CD4-positive, alpha-beta T cell (primary cell): ENCODE measurements at regions of chr14 and their contacts with region 1.

Region 1: GRCh38 chr14:22570132-22570949 is 18.7 kb downstream of the DAD1 start:
- DNase-seq: peak; percentile 63 to 98 (median 80)
- ATAC-seq: peak; percentile 85
- H3K4me3 ChIP-seq: peak overlapping the region; percentile 45
- H3K4me3 Mint-ChIP-seq: peak overlapping the region; percentile 73
- H3K27ac ChIP-seq: peak overlapping the region; percentile 79 to 92
- H3K27ac Mint-ChIP-seq: peak overlapping the region; percentile 97
- H3K4me1 ChIP-seq: peaks cover 43% of the 10 kb centered on the region
- H3K4me1 Mint-ChIP-seq: peaks cover 71% of the 10 kb centered on the region
- H3K27me3 ChIP-seq: no peaks in the 10 kb centered on the region
- H3K27me3 Mint-ChIP-seq: no peaks in the 10 kb centered on the region
- CTCF ChIP-seq: peak; percentile 92

Region 2: GRCh38 chr14:21917699-21918436 is 652.5 kb before region 1 on chr14:
- CTCF ChIA-PET with region 1: interaction called, 28 read pairs
- POLR2A ChIA-PET with region 1: interaction called, 9 read pairs
- intact Hi-C with region 1: loop called (anchors 5 kb)
- DNase-seq: peak; percentile 17 to 84 (median 49)
- ATAC-seq: peak; percentile 66
- H3K4me3 ChIP-seq: peak overlapping the region; percentile 40
- H3K4me3 Mint-ChIP-seq: peak overlapping the region; percentile 80
- H3K27ac ChIP-seq: no peak overlapping the region
- H3K27ac Mint-ChIP-seq: peak overlapping the region; percentile 73
- H3K4me1 ChIP-seq: peaks cover 12% of the 10 kb centered on the region
- H3K4me1 Mint-ChIP-seq: peaks cover 69% of the 10 kb centered on the region
- H3K27me3 ChIP-seq: no peaks in the 10 kb centered on the region
- H3K27me3 Mint-ChIP-seq: no peaks in the 10 kb centered on the region
- CTCF ChIP-seq: peak; percentile 78

Region 3: GRCh38 chr14:22505697-22506377 is 64.5 kb before region 1 on chr14:
- CTCF ChIA-PET with region 1: interaction called, 21 read pairs
- POLR2A ChIA-PET with region 1: interaction called, 8 read pairs
- intact Hi-C with region 1: no loop called
- DNase-seq: peak in 5 of 14 experiments; percentile 26 to 65 (median 56)
- ATAC-seq: peak; percentile 36
- H3K4me3 ChIP-seq: peak overlapping the region; percentile 61
- H3K4me3 Mint-ChIP-seq: peak overlapping the region; percentile 77
- H3K27ac ChIP-seq: peak overlapping the region; percentile 77 to 99
- H3K27ac Mint-ChIP-seq: peak overlapping the region; percentile 93
- H3K4me1 ChIP-seq: peaks cover 45% of the 10 kb centered on the region
- H3K4me1 Mint-ChIP-seq: peaks cover 79% of the 10 kb centered on the region
- H3K27me3 ChIP-seq: no peaks in the 10 kb centered on the region
- H3K27me3 Mint-ChIP-seq: no peaks in the 10 kb centered on the region
- CTCF ChIP-seq: no peak

Region 4: GRCh38 chr14:22589096-22589839 is 18.9 kb after region 1 on chr14 and contains the start of gene DAD1:
- CTCF ChIA-PET with region 1: interaction called, 87 read pairs
- POLR2A ChIA-PET with region 1: interaction called, 137 read pairs
- intact Hi-C with region 1: loop called (anchors 1 to 2 kb)
- DNase-seq: peak; percentile 98 to 100 (median 100)
- ATAC-seq: peak; percentile 87
- H3K4me3 ChIP-seq: peak within 1 kb of the TSS; percentile 82
- H3K4me3 Mint-ChIP-seq: peak within 1 kb of the TSS; percentile 96
- H3K27ac ChIP-seq: peak within 1 kb of the TSS; percentile 92 to 96
- H3K27ac Mint-ChIP-seq: peak within 1 kb of the TSS; percentile 98
- H3K4me1 ChIP-seq: peaks cover 39% of the 10 kb centered on the region
- H3K4me1 Mint-ChIP-seq: peaks cover 60% of the 10 kb centered on the region
- H3K27me3 ChIP-seq: no peaks in the 10 kb centered on the region
- H3K27me3 Mint-ChIP-seq: no peaks in the 10 kb centered on the region
- CTCF ChIP-seq: no peak
- total RNA-seq, gene DAD1: 41.8 to 44.1 TPM

Region 5: GRCh38 chr14:22822571-22823098 is 252.3 kb after region 1 on chr14:
- CTCF ChIA-PET with region 1: interaction called, 25 read pairs
- POLR2A ChIA-PET with region 1: interaction called, 10 read pairs
- intact Hi-C with region 1: no loop called
- DNase-seq: peak; percentile 46 to 85 (median 64)
- ATAC-seq: peak; percentile 84
- H3K4me3 ChIP-seq: peak overlapping the region; percentile 44
- H3K4me3 Mint-ChIP-seq: peak overlapping the region; percentile 2
- H3K27ac ChIP-seq: no peak overlapping the region
- H3K27ac Mint-ChIP-seq: no peak overlapping the region
- H3K4me1 ChIP-seq: peaks cover 18% of the 10 kb centered on the region
- H3K4me1 Mint-ChIP-seq: peaks cover 23% of the 10 kb centered on the region
- H3K27me3 ChIP-seq: peaks cover 0 to 5% of the 10 kb centered on the region in 2 experiments
- H3K27me3 Mint-ChIP-seq: peaks cover 10% of the 10 kb centered on the region
- CTCF ChIP-seq: peak; percentile 83

Region 6: DNA sequence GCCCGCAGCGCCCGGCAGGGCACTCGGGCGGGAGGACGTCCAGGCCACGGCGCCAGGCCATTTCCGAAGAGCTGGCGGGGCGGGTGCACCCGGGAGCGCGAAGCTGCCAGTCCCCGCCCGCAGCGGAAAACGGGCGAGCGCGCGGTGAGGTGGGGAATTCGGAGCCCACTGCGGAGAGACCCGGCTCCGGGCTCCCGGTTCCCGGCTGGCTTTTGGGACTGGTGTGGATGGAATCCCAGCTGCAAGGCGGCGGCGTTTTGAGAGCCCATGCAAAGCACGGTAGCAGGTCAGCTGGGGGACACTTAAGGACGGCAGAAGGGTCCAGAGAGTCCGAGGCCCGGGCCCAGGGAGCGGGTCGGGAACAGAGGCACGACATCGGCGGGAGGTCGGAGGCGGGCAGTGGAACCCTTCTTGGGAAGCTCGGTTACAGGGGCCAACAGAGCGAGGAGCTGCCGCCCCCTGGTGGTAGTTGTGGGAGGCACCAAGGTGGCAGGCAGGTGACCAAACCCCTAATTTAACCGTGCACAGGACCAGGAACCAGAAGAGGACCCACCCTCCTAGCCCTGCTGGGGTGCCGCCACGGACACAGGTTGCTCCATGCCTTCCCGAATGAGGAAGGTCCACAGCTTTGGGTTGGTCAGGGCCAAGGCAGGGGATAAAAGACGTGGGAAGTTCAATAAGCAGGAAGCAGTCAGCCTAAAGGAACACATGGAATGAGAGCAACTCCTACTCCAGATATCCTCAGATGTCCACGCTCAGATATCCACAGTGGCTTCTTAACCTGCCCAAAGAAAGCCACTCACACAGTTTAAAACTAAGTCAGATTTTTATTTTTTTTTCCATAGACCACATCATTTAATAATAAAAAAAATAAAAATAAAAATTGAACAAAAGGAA is 487.7 kb after region 1 on chr14:
- CTCF ChIA-PET with region 1: interaction called, 4 read pairs
- POLR2A ChIA-PET with region 1: interaction called, 3 read pairs
- intact Hi-C with region 1: loop called (anchors 5 kb)
- DNase-seq: peak; percentile 74 to 94 (median 86)
- ATAC-seq: peak; percentile 73
- H3K4me3 ChIP-seq: peak overlapping the region; percentile 75
- H3K4me3 Mint-ChIP-seq: peak overlapping the region; percentile 90
- H3K27ac ChIP-seq: no peak overlapping the region
- H3K27ac Mint-ChIP-seq: peak overlapping the region; percentile 63
- H3K4me1 ChIP-seq: peaks cover 24% of the 10 kb centered on the region
- H3K4me1 Mint-ChIP-seq: peaks cover 18% of the 10 kb centered on the region
- H3K27me3 ChIP-seq: no peaks in the 10 kb centered on the region
- H3K27me3 Mint-ChIP-seq: no peaks in the 10 kb centered on the region
- CTCF ChIP-seq: peak; percentile 91

Region 7: GRCh38 chr14:23539248-23540140 is 969.2 kb after region 1 on chr14:
- CTCF ChIA-PET with region 1: no interaction called
- POLR2A ChIA-PET with region 1: no interaction called
- intact Hi-C with region 1: no loop called
- DNase-seq: peak in 5 of 14 experiments; percentile 10 to 69 (median 55)
- ATAC-seq: peak; percentile 78
- H3K4me3 ChIP-seq: no peak overlapping the region
- H3K4me3 Mint-ChIP-seq: no peak overlapping the region
- H3K27ac ChIP-seq: no peak overlapping the region
- H3K27ac Mint-ChIP-seq: no peak overlapping the region
- H3K4me1 ChIP-seq: peaks cover 4% of the 10 kb centered on the region
- H3K4me1 Mint-ChIP-seq: no peaks in the 10 kb centered on the region
- H3K27me3 ChIP-seq: no peaks in the 10 kb centered on the region
- H3K27me3 Mint-ChIP-seq: peaks cover 5% of the 10 kb centered on the region
- CTCF ChIP-seq: peak; percentile 78